ENCODE measurements at regions of chr19 and their contacts with region 1.

Region 1: DNA sequence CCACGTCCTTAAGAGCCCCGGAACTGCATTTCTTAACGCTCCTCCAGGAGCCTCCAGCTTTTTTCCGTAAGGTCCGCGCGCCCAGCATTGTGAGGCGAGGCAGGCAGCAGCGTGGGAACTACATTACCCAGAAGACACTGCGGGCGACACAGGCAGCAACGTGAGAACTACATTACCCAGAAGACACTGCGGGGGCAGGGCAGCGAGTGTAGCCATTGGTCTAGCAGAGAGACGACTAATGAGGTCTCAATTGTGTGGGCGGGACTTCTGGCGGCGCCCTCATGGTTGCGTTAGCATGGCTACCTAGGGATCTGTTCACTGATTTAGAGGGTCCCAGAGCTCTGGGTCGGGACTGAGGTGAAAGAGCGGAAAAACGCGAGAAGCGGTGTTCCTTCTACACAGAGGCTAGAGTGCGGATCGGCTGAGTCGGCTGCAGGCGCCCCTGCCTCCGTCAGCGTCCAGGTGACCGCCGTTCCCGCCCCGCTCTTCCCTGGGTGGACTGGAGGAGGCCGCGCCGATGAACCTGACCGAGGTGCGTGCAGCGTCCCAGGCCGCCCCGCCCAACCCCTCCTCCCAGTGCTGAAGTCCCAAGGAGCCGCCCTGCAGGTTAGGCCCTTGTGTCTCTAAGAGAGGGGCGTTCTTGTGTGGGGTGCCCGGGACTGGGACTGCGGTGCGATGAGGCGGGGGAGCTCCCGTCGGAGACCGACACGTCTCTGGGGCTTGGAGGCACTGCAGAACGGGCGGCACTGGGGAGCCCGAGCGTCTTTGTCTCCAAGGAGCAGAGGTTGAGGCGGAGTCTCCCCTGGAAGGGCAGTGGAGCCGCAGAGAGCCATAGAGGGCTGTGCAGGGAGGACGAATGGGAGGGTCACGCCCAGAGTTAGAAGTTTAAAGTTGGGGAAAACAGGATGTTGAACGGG is at the start of gene ZNF749:
- DNase-seq: peak; percentile 99
- H3K4me3 Mint-ChIP-seq: peak within 1 kb of the TSS; percentile 95
- H3K27ac Mint-ChIP-seq: peak within 1 kb of the TSS; percentile 95
- H3K4me1 Mint-ChIP-seq: peaks cover 19% of the 10 kb centered on the region
- H3K27me3 Mint-ChIP-seq: peaks cover 2% of the 10 kb centered on the region
- total RNA-seq, gene ZNF749: 22.5 and 26.5 TPM in 2 replicates

Region 2: GRCh38 chr19:56769650-56770049 is 665.7 kb before region 1 on chr19:
- intact Hi-C with region 1: no loop called
- DNase-seq: no peak
- H3K4me3 Mint-ChIP-seq: no peak overlapping the region
- H3K27ac Mint-ChIP-seq: no peak overlapping the region
- H3K4me1 Mint-ChIP-seq: no peaks in the 10 kb centered on the region
- H3K27me3 Mint-ChIP-seq: no peaks in the 10 kb centered on the region

Region 3: DNA sequence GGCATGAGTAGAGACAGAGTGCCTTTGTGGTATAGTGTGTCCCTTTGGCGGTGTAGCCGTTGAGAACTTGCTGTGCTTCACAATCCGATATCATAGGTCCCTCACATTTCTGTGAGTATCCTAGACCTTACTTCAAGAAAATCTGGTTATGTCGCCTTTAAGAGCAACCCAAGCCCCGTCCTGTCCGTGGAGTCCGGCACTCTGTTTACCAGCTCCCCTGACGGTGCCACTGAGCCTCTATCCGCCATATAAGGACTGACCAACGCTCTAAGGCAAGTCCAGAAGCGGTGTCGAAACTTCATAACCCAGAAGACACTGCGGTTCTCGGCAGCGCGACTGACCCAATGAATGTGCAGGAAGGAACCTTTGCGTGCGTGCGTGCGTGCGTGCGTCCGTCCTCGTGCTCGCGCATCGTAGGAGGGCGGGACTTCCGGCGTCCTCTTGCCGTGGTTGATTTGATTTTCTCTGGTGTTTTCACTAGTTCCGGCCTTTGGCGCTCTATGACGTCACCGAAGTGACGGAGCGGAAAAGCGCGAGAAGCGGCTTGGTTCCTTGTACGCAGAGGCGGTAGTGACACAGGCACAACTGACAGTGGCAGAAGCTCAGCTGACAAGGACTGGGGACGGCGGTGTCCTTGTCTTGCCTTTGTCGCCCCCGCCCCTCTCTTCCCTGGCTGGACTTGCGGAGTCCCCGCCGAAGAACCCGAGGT is 72.2 kb before region 1 on chr19 and contains the starts of genes TRAPPC2B and ZNF547:
- intact Hi-C with region 1: loop called (anchors 2 kb)
- DNase-seq: peak; percentile 100
- H3K4me3 Mint-ChIP-seq: peak within 1 kb of the TSS; percentile 87
- H3K27ac Mint-ChIP-seq: peak within 1 kb of the TSS; percentile 92
- H3K4me1 Mint-ChIP-seq: peaks cover 14% of the 10 kb centered on the region
- H3K27me3 Mint-ChIP-seq: peaks cover 3% of the 10 kb centered on the region
- total RNA-seq, gene TRAPPC2B: 4.1 and 4.3 TPM in 2 replicates
- total RNA-seq, gene ZNF547: 1.3 and 1.6 TPM in 2 replicates

Region 4: GRCh38 chr19:57477191-57478008 is 42.1 kb after region 1 on chr19 and contains the start of gene ZNF772:
- intact Hi-C with region 1: loop called (anchors 2 kb)
- DNase-seq: peak; percentile 95
- H3K4me3 Mint-ChIP-seq: peak within 1 kb of the TSS; percentile 82
- H3K27ac Mint-ChIP-seq: peak within 1 kb of the TSS; percentile 82
- H3K4me1 Mint-ChIP-seq: peaks cover 8% of the 10 kb centered on the region
- H3K27me3 Mint-ChIP-seq: no peaks in the 10 kb centered on the region
- total RNA-seq, gene ZNF772: 2.5 and 2.8 TPM in 2 replicates

Region 5: GRCh38 chr19:57506162-57506561 is 70.8 kb after region 1 on chr19:
- intact Hi-C with region 1: no loop called
- DNase-seq: no peak
- H3K4me3 Mint-ChIP-seq: no peak overlapping the region
- H3K27ac Mint-ChIP-seq: no peak overlapping the region
- H3K4me1 Mint-ChIP-seq: peaks cover 2% of the 10 kb centered on the region
- H3K27me3 Mint-ChIP-seq: no peaks in the 10 kb centered on the region

Region 6: DNA sequence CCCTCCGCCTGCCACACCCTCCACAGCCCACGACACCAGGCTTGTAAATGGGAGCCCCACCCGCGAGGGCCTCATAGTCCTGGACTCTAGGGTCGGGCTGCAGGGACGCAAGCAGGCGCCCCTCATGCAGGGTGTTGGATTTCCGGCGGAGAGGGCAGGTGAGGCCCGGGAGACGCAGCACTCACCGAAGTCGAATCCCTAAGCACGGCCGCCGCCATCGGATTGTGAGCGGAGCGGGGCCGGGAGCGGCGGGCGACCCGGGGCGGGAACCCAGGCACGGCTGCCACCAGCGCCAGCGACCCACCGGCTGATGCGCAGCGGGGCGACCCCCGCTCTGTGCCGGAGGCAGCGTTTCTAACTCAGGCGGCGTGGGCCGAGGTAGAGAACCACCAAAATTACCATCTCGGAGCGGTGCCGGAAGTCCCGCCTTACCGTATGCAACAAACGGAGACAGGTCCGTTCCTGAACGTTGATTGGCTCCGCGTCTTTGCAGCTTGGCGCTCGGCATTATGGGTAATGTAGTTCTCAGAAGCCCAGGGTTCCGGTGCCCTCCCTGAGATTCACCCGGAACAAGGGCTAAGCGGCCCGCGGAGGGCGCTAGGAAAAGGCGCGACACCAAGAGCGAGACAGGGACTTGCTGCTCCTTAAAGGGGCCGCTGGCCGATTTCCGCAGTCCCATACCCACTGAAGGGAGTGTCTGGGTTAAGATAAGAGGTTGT is 143.3 kb after region 1 on chr19 and contains the start of gene ZNF416:
- intact Hi-C with region 1: loop called (anchors 1 kb)
- DNase-seq: peak; percentile 98
- H3K4me3 Mint-ChIP-seq: peak within 1 kb of the TSS; percentile 84
- H3K27ac Mint-ChIP-seq: peak within 1 kb of the TSS; percentile 73
- H3K4me1 Mint-ChIP-seq: peaks cover 19% of the 10 kb centered on the region
- H3K27me3 Mint-ChIP-seq: no peaks in the 10 kb centered on the region
- total RNA-seq, gene ZNF416: 3.4 and 3.5 TPM in 2 replicates

Region 7: DNA sequence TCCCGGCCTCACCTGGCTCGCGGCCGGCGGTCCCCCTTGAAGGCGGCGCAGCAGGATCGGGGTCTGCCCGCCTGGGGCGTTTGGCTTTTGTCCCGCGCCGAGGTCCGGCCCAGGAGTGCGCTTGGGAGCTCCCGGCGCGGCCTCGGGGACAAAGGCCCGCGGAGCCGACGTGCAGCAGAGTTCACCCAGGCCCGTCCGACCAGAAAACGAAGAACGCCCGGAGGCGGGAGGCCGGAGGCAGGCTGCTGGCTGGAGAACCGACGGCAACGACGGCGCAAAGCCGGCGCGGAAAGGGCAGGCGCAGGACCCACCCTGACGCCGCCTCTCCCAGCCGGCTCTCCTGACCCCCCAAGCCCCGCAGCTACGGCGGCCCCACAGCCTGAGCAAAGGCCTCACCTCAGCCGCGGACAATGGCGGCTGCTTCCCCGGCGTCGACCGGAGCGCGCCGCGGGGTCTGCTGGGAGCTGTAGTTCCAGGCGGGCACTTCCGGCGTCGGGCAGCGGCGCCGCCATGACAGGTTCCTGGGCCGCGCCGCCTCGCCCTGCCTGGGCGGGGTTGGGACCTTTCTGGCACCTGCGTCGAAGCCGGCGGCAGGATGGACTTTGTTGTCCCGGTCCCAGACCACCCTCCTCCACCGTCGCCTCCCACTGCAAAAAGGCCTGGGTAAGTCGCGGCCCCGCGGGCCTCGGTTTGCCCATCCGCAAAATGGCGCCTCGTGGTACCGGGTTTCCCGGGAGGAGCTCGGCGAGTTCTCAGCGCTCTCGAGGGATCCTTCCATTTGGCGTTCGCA is 567.3 kb after region 1 on chr19 and contains the start of gene ZNF606:
- intact Hi-C with region 1: loop called (anchors 1 kb)
- DNase-seq: peak; percentile 95
- H3K4me3 Mint-ChIP-seq: peak within 1 kb of the TSS; percentile 84
- H3K27ac Mint-ChIP-seq: peak within 1 kb of the TSS; percentile 88
- H3K4me1 Mint-ChIP-seq: peaks cover 11% of the 10 kb centered on the region
- H3K27me3 Mint-ChIP-seq: no peaks in the 10 kb centered on the region
- total RNA-seq, gene ZNF606: 6.6 and 7.0 TPM in 2 replicates

Measured in activated CD4-positive, alpha-beta T cell treated with anti-CD3 and anti-CD28 coated beads, Interleukin-2, amount 10 ng/mL, durations not matched to agents 24 days and 14 days (primary cell).